Heart left ventricle (tissue), 16 donors: ENCODE measurements at regions of chr7 and their contacts with region 1.

Region 1: DNA sequence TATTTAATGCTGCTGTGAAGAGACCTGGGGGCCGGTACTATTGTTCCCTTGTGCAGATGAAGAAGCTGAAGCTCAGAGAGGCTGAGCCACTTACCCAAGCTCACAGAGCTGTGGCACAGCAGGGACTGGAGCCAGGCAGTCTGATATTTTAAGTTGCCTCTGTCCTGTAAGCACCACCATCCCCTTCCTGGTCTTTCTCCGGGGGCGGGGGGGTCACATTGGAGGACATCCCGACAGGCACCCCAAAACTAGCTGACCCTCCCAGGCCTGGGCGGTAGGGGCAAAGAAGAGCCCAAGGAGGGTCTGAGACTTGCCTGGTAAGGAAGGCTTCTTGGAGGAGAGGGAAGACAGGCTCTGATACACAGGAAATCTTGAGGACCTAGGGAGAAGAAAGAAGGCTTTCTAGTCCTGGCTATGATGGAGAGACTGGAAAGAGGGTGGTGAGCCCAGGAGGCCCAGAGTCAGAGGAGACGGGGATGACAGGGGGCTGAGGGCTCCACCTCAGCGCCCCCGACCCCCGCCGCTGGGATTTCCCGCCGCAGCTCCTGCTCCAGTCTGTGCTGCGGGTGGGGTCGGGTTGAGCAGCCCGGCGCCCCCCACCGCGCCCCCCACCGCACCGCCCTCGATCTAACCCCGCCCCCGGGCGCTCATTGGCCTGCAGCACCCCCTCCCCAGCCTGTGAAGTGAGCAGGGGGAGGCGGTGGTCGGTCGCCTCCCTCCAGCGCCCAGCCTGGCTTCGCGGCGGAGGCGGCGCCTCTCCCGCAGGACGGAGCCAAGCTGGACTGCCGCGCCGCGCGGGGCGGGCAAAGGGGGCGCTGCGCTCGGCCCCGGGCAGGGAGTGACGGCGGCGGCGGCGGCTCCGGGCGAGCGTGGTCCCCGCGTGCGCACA is at the start of gene ADCYAP1R1:
- DNase-seq: peak in 4 of 5 donors; percentile 42 to 63 (median 48)
- ATAC-seq: peak; percentile 19 to 75 (median 43)
- H3K4me3 ChIP-seq: peak within 1 kb of the TSS; percentile 37 to 64 (median 52)
- H3K27ac ChIP-seq: peak within 1 kb of the TSS in 4 of 12 donors; percentile 23 to 46 (median 32)
- H3K4me1 ChIP-seq: peaks cover 0 to 18% (median 6%) of the 10 kb centered on the region in 12 donors
- H3K27me3 ChIP-seq: peaks cover 0 to 41% (median 29%) of the 10 kb centered on the region in 9 donors
- CTCF ChIP-seq: peak in 5 of 12 donors; percentile 14 to 23 (median 15)
- POLR2A ChIP-seq: no peak
- total RNA-seq, gene ADCYAP1R1: 0.42 to 7.7 (median 1.8) TPM

Region 2: GRCh38 chr7:30983042-30983913 is 68.6 kb before region 1 on chr7:
- intact Hi-C with region 1: loop called in 1 of 10 experiments (anchors 5 kb)
- DNase-seq: peak; percentile 78 to 90 (median 83)
- ATAC-seq: peak; percentile 27 to 93 (median 86)
- H3K4me3 ChIP-seq: no peak overlapping the region
- H3K27ac ChIP-seq: no peak overlapping the region
- H3K4me1 ChIP-seq: peaks cover 0 to 13% (median 5%) of the 10 kb centered on the region in 12 donors
- H3K27me3 ChIP-seq: peaks cover 0 to 11% (median 0%) of the 10 kb centered on the region in 9 donors
- CTCF ChIP-seq: peak; percentile 79 to 98 (median 94)
- POLR2A ChIP-seq: no peak

Region 3: GRCh38 chr7:30996256-30996655 is 55.6 kb before region 1 on chr7:
- intact Hi-C with region 1: loop called in 1 of 10 experiments (anchors 10 kb)
- DNase-seq: peak in 3 of 5 donors; percentile 48 to 72 (median 68)
- ATAC-seq: peak in 3 of 4 donors; percentile 43 to 66 (median 47)
- H3K4me3 ChIP-seq: no peak overlapping the region
- H3K27ac ChIP-seq: no peak overlapping the region
- H3K4me1 ChIP-seq: peaks cover 0 to 8% (median 0%) of the 10 kb centered on the region in 12 donors
- H3K27me3 ChIP-seq: peaks cover 0 to 6% (median 0%) of the 10 kb centered on the region in 9 donors
- CTCF ChIP-seq: no peak
- POLR2A ChIP-seq: no peak

Region 4: GRCh38 chr7:31074120-31074383 is 22.2 kb after region 1 on chr7:
- intact Hi-C with region 1: no loop called
- DNase-seq: peak in 2 of 5 donors; percentile 21 to 43
- ATAC-seq: peak in 2 of 4 donors; percentile 32 to 67
- H3K4me3 ChIP-seq: no peak overlapping the region
- H3K27ac ChIP-seq: peak overlapping the region in 4 of 12 donors; percentile 9 to 37 (median 23)
- H3K4me1 ChIP-seq: peaks cover 0 to 18% (median 4%) of the 10 kb centered on the region in 12 donors
- H3K27me3 ChIP-seq: no peaks in the 10 kb centered on the region
- CTCF ChIP-seq: no peak
- POLR2A ChIP-seq: no peak